AG04449 (cell line): ENCODE measurements at regions of chr2 and their contacts with region 1.

Region 1: DNA sequence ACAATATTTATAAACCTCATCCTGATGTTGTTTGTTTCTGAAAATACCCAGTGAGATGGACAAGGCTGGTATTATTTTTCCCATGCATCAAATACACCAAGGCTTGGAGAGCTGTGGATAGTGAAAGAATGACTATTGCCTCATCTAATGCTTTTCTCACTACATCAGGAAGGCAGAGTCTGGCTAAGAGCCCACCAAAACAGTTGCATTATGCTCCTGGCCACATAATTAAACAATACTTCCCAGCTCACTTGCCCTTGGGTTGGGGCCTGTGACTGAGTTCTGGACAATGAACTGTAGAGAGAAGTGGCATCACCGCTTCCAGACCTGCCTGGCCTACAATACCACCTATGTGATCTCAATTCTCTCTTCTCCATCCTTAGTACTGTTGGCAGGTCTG is 46.4 kb upstream of the REEP1 start:
- DNase-seq: peak; percentile 51
- H3K4me3 ChIP-seq: no peak overlapping the region
- CTCF ChIP-seq: no peak

Region 2: DNA sequence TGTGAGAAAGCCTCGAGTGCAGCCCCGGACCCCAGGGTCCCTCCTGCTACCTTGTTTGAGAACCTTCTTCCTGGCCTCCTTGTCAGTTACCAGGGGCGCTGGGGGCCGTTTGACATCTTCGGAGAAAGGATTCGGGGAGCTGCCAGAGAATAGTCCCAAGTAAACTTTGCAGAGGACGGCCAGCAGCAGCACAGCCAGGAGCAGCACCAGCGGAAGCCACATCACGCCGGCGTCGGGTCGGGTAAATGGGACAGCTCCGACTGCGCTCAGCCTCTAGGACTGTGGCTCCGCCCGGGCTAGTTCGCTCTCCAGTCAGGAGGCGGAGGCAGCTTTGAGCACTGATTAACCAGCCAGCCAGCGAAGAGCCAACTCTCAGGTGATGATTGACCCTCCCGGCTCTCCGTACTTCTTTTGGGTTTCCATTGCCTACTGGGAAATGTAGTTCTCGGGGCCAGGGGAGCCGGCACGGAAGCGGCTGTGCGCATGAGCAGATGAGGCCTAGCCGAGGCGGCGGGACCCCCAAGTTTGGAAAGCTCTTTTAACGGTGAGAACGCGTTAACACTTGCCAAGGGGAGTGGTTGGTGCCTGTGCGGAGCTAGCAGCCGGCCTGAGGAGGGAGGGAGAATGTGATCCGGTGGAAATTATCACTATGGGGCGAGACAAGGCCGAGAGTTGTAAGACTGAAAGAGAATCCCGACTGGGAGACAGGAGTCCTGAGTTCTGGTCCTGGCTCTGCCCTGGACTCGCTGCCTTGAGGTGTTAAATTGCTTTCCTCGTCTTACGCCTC is 1029.4 kb before region 1 on chr2 and contains the starts of genes ELMOD3 and RETSAT:
- CTCF ChIA-PET with region 1: no interaction called
- POLR2A ChIA-PET with region 1: no interaction called
- DNase-seq: peak; percentile 97
- H3K4me3 ChIP-seq: peak within 1 kb of the TSS; percentile 91
- CTCF ChIP-seq: no peak

Region 3: GRCh38 chr2:86368161-86368824 is 15.6 kb before region 1 on chr2:
- CTCF ChIA-PET with region 1: interaction called, 27 read pairs
- POLR2A ChIA-PET with region 1: no interaction called
- DNase-seq: no peak
- H3K4me3 ChIP-seq: no peak overlapping the region
- CTCF ChIP-seq: peak; percentile 45

Region 4: DNA sequence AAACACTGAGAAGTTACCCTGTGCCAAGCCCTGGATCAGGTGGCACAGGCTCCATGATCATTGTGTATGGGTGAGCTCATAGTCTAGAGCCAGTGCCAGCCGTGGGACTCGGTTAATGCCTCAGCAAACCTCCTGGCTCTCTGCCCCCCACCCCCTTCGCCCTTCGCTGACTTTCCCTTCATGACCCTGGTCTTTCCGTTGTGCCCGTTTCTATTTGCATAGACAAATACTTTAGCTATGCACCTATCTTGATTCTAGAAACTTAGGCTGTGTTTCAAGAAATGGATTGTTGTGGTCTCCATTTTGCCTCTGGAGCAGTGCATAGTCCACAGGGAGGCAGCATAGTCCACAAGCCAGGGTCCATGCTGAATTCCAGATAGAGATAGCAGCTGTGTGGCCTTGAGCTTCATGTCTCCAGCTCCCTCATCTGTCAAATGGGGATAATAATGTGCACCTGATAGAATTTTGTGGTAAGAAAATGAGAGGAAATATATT is 12.5 kb after region 1 on chr2:
- CTCF ChIA-PET with region 1: interaction called, 14 read pairs
- POLR2A ChIA-PET with region 1: no interaction called
- DNase-seq: no peak
- H3K4me3 ChIP-seq: no peak overlapping the region
- CTCF ChIP-seq: peak; percentile 24